ENCODE measurements at regions of chr19 and their contacts with region 1.

Region 1: DNA sequence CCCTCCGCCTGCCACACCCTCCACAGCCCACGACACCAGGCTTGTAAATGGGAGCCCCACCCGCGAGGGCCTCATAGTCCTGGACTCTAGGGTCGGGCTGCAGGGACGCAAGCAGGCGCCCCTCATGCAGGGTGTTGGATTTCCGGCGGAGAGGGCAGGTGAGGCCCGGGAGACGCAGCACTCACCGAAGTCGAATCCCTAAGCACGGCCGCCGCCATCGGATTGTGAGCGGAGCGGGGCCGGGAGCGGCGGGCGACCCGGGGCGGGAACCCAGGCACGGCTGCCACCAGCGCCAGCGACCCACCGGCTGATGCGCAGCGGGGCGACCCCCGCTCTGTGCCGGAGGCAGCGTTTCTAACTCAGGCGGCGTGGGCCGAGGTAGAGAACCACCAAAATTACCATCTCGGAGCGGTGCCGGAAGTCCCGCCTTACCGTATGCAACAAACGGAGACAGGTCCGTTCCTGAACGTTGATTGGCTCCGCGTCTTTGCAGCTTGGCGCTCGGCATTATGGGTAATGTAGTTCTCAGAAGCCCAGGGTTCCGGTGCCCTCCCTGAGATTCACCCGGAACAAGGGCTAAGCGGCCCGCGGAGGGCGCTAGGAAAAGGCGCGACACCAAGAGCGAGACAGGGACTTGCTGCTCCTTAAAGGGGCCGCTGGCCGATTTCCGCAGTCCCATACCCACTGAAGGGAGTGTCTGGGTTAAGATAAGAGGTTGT is at the start of gene ZNF416:
- DNase-seq: peak; percentile 95
- H3K4me3 Mint-ChIP-seq: peak within 1 kb of the TSS; percentile 79
- H3K27ac Mint-ChIP-seq: peak within 1 kb of the TSS; percentile 76
- H3K4me1 Mint-ChIP-seq: peaks cover 13% of the 10 kb centered on the region
- H3K27me3 Mint-ChIP-seq: no peaks in the 10 kb centered on the region
- total RNA-seq, gene ZNF416: 2.9 and 3.5 TPM in 2 replicates

Region 2: GRCh38 chr19:57527136-57527881 is 51.3 kb before region 1 on chr19 and contains the start of gene ZNF549:
- intact Hi-C with region 1: loop called (anchors 1 kb)
- DNase-seq: peak; percentile 84
- H3K4me3 Mint-ChIP-seq: peak within 1 kb of the TSS; percentile 97
- H3K27ac Mint-ChIP-seq: peak within 1 kb of the TSS; percentile 78
- H3K4me1 Mint-ChIP-seq: peaks cover 15% of the 10 kb centered on the region
- H3K27me3 Mint-ChIP-seq: no peaks in the 10 kb centered on the region
- total RNA-seq, gene ZNF549: 3.5 and 4.1 TPM in 2 replicates

Region 3: DNA sequence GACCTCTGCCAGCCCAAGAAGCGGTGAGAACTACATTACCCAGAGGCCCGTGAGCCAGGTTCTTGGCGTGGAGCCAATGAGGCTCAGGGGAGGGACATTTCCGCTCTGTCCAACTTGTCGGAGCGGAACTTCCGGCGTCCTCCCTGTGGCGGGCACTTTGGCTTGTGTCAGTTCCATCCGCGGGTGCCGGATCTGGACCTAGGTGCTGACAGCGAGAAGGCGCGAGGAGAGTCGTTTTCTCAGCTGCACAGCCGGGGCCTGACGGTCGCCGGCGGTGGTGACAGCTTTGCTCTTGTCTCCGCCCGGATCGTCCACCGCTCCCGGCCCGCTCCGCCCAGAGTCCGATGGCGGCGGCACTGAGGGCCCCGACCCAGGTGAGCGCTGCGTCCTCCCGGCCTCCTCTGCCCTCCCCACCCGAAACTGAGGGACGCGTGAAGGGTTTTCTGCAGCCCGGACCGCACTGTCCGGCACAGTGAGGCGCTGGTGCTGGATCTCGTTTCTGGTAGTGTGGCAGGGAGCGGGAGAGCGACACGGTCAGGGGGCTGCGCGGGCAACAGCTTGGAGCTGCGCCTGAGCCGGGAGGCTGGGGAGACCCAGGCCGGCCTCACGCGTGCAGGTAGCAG is 21.2 kb after region 1 on chr19 and contains the start of gene ZNF530:
- intact Hi-C with region 1: loop called (anchors 1 kb)
- DNase-seq: peak; percentile 78
- H3K4me3 Mint-ChIP-seq: peak within 1 kb of the TSS; percentile 80
- H3K27ac Mint-ChIP-seq: no peak within 1 kb of the TSS
- H3K4me1 Mint-ChIP-seq: peaks cover 10% of the 10 kb centered on the region
- H3K27me3 Mint-ChIP-seq: no peaks in the 10 kb centered on the region
- total RNA-seq, gene ZNF530: 4.1 and 5.2 TPM in 2 replicates

Region 4: DNA sequence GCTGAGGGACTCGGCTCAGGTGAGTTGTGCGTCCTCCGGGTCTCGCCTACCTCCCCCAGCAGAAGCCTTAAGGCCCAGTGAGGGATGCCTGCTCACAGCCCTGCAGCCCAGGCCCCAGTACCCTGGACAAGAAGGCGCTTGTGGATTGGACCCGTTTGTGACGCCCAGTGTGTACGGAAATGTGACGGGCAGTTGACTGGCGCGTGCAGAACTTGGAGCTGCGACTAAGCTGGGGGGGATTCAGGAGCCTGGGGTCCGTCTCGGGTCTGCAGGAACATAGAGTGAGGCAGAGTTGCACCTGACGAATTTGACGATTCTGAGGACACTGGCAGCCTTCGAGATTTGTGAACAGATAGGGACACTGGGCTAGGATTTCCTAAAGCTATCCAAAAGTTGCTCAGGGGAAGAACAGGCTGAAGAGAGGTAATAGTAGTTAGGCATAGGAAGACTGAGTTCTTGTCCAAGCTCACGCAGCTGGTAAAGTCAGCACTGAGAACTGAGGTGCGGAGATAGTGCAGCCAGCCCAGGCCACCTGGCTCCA is 103.7 kb after region 1 on chr19:
- intact Hi-C with region 1: loop called (anchors 2 kb)
- DNase-seq: no peak
- H3K4me3 Mint-ChIP-seq: peak overlapping the region; percentile 93
- H3K27ac Mint-ChIP-seq: peak overlapping the region; percentile 85
- H3K4me1 Mint-ChIP-seq: peaks cover 22% of the 10 kb centered on the region
- H3K27me3 Mint-ChIP-seq: no peaks in the 10 kb centered on the region